CD4-positive, alpha-beta memory T cell (primary cell): ENCODE measurements at regions of chr16 and their contacts with region 1.

Region 1: DNA sequence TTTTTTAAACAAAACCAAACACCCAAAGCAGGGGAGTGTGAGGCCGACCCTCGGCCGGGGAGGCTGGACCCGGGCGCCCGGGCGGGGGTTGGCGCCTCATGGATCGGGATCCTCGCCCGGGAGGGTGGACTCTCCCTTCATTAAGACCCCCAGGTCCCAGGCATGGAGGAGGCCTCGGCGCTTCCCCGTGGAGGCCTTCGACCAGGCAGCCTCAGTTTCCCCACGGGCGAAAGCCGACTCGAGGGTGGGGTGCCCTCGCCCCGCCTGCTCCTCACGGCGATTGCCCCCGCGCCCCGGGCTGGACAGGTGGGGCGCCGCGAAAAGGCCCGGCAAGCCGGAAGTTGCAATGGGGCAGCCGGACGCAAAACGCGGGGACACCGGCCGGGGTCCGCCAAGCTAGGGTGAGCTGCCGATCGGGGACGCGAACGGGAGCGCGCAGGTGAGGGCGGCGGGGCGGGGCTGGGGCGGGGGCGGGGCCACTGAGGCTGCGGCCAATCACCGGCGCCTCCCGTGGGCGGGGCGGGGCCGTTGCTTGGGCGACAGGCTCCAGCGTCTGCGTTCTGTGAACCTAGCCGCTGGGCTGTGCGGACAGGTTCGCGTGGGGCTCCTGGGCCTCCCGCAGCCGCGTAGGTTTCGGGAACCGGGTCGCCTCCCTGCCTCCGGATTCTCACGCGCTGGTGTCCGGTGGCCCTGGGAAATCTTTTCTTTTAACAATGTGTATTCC is 6.0 kb upstream of the ZNF205 start:
- DNase-seq: peak; percentile 87 to 90 (median 88)
- H3K4me3 ChIP-seq: peak overlapping the region; percentile 38 to 58
- H3K4me3 Mint-ChIP-seq: peak overlapping the region; percentile 78 to 92 (median 88)
- H3K27ac ChIP-seq: peak overlapping the region; percentile 82
- H3K27ac Mint-ChIP-seq: peak overlapping the region; percentile 86 to 95 (median 92)
- H3K4me1 ChIP-seq: peaks cover 37% of the 10 kb centered on the region
- H3K4me1 Mint-ChIP-seq: peaks cover 12 to 41% (median 27%) of the 10 kb centered on the region in 4 donors
- H3K27me3 ChIP-seq: no peaks in the 10 kb centered on the region
- H3K27me3 Mint-ChIP-seq: no peaks in the 10 kb centered on the region

Region 2: DNA sequence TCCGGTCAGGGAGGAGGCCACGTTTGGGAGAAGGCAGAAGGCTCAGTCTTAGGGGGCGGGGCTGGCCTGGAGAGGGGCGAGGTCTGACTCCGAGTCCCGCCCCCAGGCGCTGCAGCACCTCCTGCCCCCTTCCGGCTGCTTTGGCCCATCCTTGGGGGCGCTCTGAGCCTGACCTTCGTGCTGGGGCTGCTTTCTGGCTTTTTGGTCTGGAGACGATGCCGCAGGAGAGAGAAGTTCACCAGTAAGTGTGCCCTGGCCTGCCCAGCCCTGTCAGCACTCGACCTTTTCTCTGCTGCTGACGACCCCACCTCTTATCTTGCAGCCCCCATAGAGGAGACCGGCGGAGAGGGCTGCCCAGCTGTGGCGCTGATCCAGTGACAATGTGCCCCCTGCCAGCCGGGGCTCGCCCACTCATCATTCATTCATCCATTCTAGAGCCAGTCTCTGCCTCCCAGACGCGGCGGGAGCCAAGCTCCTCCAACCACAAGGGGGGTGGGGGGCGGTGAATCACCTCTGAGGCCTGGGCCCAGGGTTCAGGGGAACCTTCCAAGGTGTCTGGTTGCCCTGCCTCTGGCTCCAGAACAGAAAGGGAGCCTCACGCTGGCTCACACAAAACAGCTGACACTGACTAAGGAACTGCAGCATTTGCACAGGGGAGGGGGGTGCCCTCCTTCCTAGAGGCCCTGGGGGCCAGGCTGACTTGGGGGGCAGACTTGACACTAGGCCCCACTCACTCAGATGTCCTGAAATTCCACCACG is 84.7 kb before region 1 on chr16:
- CTCF ChIA-PET with region 1: no interaction called
- POLR2A ChIA-PET with region 1: no interaction called
- intact Hi-C with region 1: no loop called
- DNase-seq: peak; percentile 54 to 94 (median 62)
- H3K4me3 ChIP-seq: peak overlapping the region in 1 of 2 donors; percentile 59
- H3K4me3 Mint-ChIP-seq: peak overlapping the region; percentile 79 to 97 (median 86)
- H3K27ac ChIP-seq: peak overlapping the region; percentile 90
- H3K27ac Mint-ChIP-seq: peak overlapping the region; percentile 85 to 99 (median 89)
- H3K4me1 ChIP-seq: peaks cover 51% of the 10 kb centered on the region
- H3K4me1 Mint-ChIP-seq: peaks cover 19 to 65% (median 41%) of the 10 kb centered on the region in 4 donors
- H3K27me3 ChIP-seq: no peaks in the 10 kb centered on the region
- H3K27me3 Mint-ChIP-seq: peaks cover 0 to 2% of the 10 kb centered on the region in 2 donors

Region 3: DNA sequence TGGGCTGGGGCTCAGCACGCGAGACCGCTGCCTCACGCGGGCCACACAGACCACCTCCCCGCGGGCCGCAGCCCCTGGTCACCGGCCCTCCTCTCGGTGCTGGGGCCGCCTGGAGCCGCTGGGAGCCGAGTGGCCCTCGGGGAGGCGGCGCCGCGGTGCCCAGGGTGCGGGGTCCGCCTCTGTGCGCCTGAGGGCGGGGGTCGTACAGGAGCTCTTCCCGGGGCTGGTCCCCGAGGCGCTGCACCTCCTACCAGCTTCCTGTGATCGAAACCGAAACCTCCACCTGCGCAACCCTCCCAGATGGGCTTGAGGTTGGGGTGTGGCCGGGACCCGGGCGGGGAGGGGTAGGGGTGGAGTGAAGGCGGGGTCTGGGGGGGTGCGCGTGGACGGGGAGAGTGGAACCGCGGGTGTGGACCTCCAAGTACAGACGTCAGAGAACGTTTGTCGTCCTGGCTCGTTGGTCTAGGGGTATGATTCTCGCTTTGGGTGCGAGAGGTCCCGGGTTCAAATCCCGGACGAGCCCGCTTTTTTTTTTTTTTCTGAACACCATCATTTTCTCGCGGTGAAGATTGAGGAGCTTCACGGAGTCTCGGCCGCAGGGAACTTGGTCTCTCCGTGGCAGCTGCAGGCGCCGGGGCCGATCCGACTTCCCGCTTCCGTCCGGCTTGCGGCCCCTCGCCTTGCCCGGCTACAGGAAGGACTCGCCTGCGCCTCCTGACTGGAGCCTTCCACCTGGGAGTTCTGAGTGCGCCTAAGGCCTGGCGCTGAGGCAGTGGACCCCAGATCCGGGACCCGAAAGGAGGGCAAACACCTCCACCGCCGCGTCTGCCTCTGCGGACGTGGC is 52.3 kb after region 1 on chr16:
- CTCF ChIA-PET with region 1: interaction called, 3 read pairs
- POLR2A ChIA-PET with region 1: interaction called, 17 read pairs
- intact Hi-C with region 1: loop called (anchors 2 kb)
- DNase-seq: peak; percentile 92 to 98 (median 94)
- H3K4me3 ChIP-seq: peak overlapping the region; percentile 65 to 66
- H3K4me3 Mint-ChIP-seq: peak overlapping the region; percentile 83 to 96 (median 92)
- H3K27ac ChIP-seq: peak overlapping the region; percentile 62
- H3K27ac Mint-ChIP-seq: peak overlapping the region; percentile 92 to 100 (median 96)
- H3K4me1 ChIP-seq: peaks cover 25% of the 10 kb centered on the region
- H3K4me1 Mint-ChIP-seq: peaks cover 11 to 36% (median 25%) of the 10 kb centered on the region in 4 donors
- H3K27me3 ChIP-seq: no peaks in the 10 kb centered on the region
- H3K27me3 Mint-ChIP-seq: peaks cover 0 to 2% of the 10 kb centered on the region in 2 donors